Pancreas (tissue), 10 donors: ENCODE measurements at regions of chr4 and their contacts with region 1.

Region 1: GRCh38 chr4:173025131-173025530 is 143.5 kb upstream of the GALNT7 start:
- DNase-seq: peak in 3 of 6 donors; percentile 58 to 69 (median 62)
- ATAC-seq: peak; percentile 90 to 98 (median 96)
- H3K4me3 ChIP-seq: no peak overlapping the region
- H3K27ac ChIP-seq: no peak overlapping the region
- H3K4me1 ChIP-seq: no peaks in the 10 kb centered on the region
- H3K27me3 ChIP-seq: no peaks in the 10 kb centered on the region
- CTCF ChIP-seq: peak; percentile 44 to 69 (median 54)

Region 2: GRCh38 chr4:173159791-173160190 is 134.7 kb after region 1 on chr4:
- intact Hi-C with region 1: loop called in 1 of 3 experiments (anchors 5 kb)
- DNase-seq: no peak
- ATAC-seq: no peak
- H3K4me3 ChIP-seq: no peak overlapping the region
- H3K27ac ChIP-seq: no peak overlapping the region
- H3K4me1 ChIP-seq: no peaks in the 10 kb centered on the region
- H3K27me3 ChIP-seq: no peaks in the 10 kb centered on the region
- CTCF ChIP-seq: no peak

Region 3: DNA sequence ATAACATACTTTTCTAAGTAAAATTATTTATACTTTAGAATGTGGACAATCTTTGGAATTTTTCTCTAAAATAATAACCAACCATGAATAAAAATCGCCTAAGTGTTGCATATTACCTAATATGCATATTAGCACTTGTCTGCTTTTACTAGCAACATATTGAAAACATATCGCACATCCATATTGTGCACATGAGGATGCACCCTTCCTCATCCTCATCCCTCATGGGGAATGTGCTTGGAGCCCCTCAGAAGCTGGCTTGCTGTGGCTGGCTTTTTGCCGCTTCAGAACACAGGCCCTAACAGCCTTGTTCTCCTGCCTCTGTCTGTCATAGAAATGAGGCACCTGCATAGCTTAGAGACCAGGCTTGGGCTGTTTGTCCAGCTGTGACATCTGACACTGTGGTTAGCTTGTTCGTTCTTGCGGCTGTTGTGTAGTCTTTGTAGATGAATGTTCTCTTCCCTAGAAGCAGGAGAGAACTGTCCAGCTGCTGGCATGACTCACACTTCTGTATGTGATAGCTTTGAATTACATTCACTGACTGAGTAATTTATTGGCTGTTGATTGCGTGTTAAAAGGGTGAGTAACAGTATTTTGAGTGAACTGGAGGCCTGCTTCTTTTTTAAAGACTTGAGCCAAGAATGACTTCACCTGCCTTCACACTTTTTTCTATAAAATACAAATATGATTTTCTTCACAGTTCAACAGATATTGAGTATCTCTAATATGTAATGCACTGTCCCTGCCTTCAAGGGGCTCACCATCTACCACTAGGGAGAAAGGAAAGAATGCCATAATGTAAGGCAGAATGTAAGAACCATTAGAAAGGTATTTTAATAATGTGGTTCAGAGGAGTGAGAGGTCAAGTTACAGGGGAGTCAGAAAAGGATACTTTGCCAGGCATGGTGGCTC is 227.1 kb after region 1 on chr4:
- intact Hi-C with region 1: loop called in 2 of 3 experiments (anchors 5 kb)
- DNase-seq: peak in 4 of 6 donors; percentile 77 to 90 (median 84)
- ATAC-seq: peak; percentile 94 to 96 (median 95)
- H3K4me3 ChIP-seq: no peak overlapping the region
- H3K27ac ChIP-seq: peak overlapping the region; percentile 33 to 69 (median 48)
- H3K4me1 ChIP-seq: peaks cover 13 to 29% (median 25%) of the 10 kb centered on the region in 3 donors
- H3K27me3 ChIP-seq: no peaks in the 10 kb centered on the region
- CTCF ChIP-seq: no peak

Region 4: DNA sequence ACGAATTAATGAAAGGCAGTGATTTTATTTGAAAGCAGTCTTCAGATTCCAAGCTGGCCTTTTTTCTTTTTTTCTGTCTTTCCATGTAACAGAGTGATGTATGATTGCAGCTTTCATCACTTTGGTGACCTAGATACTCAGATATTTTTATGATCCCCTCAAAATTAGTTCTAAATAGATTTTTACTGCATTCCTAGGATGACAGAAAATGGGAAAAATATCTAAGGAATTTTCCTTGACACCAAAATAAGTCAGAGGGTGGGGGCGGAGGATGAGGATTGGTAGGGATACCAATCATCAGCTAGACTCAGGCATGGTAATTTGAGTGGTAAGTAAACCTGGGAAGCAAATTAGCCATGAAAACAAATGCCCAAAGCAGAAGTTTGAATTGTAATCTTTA is 320.9 kb after region 1 on chr4:
- intact Hi-C with region 1: no loop called
- DNase-seq: no peak
- ATAC-seq: no peak
- H3K4me3 ChIP-seq: no peak overlapping the region
- H3K27ac ChIP-seq: no peak overlapping the region
- H3K4me1 ChIP-seq: no peaks in the 10 kb centered on the region
- H3K27me3 ChIP-seq: no peaks in the 10 kb centered on the region
- CTCF ChIP-seq: no peak